Endothelial cell of umbilical vein (primary cell): ENCODE measurements at regions of chr16 and their contacts with region 1.

Region 1: DNA sequence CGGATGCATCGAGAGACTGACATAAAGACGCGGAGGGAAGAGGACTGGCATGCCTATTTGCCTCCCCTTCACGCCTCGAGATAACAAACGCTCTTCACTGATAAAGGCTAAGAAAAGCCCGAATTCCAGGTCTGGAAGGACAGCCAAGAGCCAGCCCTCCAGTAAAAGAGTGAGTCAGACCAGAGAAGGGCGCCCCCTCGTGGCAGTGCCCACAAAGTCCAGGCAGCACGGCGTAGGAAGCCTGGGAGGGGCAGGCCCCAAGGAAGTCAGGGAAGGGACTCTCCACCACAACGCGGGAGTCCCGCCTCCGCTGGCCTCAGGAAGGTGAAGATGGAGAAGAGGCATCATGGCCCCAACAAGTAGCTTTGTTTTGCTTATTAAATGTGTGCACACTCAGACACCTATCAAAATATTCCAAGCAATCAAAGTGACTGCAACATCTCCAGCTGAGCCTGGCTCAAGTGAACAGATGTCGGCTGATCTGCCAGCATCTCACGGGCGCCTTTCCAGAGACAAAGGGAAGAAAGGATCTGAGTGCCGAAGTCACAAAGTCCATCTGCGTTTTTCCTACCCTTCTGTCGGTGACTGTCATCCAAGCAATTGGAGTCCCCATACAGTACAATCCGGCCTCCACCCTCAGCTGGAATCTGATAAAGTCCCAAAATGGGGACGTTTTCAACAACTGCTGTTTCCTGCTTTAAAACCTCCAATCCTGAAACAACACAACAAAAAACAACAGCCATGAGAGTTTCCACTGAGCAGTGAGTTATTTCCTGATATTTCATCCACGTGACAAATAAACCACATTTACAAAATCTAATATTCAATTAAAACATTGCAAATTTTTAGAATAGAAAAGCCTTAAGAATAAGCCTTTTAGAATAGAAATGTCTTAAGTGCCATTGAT is 20.4 kb upstream of the SLC38A8 start:
- DNase-seq: peak; percentile 73
- H3K4me3 ChIP-seq: no peak overlapping the region
- H3K27ac ChIP-seq: peak overlapping the region; percentile 1
- H3K4me1 ChIP-seq: peaks cover 7% of the 10 kb centered on the region
- H3K27me3 ChIP-seq: no peaks in the 10 kb centered on the region
- CTCF ChIP-seq: peak; percentile 93
- POLR2A ChIP-seq: no peak

Region 2: DNA sequence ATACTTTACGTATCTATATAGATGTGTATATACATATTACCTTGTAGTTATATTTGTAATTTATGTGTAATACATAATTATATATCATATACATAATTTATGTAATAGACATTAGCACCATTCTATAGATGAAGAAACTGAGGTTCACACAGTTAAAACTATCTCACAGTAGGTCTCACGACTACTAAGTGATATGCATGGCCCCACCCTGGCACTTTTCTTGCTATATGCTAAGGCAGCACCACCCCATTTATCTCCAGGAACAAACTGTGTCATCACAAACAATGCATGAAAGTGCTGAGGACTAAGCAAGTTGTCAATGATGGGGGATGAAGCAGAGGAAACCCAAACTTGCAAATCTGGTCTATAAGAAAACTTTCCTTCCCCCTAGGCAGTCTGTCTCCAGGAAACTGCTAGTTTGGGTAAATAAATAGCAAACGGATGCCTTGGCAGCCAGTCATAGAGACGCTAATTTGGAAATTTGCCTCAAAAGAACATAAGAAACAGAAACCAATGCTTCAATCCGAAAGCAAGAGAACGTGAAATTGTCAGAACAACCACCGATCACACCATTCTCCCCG is 260.9 kb before region 1 on chr16:
- CTCF ChIA-PET with region 1: no interaction called
- POLR2A ChIA-PET with region 1: no interaction called
- dilution Hi-C with region 1: no loop called
- intact Hi-C with region 1: no loop called
- DNase-seq: peak; percentile 75
- H3K4me3 ChIP-seq: peak overlapping the region in 1 of 3 experiments; percentile 3
- H3K27ac ChIP-seq: no peak overlapping the region
- H3K4me1 ChIP-seq: peaks cover 6% of the 10 kb centered on the region
- H3K27me3 ChIP-seq: no peaks in the 10 kb centered on the region
- CTCF ChIP-seq: no peak
- POLR2A ChIP-seq: no peak

Region 3: GRCh38 chr16:83826146-83826913 is 236.7 kb before region 1 on chr16:
- CTCF ChIA-PET with region 1: interaction called, 5 read pairs
- POLR2A ChIA-PET with region 1: no interaction called
- dilution Hi-C with region 1: no loop called
- intact Hi-C with region 1: loop called (anchors 1 kb)
- DNase-seq: peak; percentile 65
- H3K4me3 ChIP-seq: no peak overlapping the region
- H3K27ac ChIP-seq: no peak overlapping the region
- H3K4me1 ChIP-seq: no peaks in the 10 kb centered on the region
- H3K27me3 ChIP-seq: peaks cover under 1 to 11% of the 10 kb centered on the region in 2 experiments
- CTCF ChIP-seq: peak; percentile 89 to 91
- POLR2A ChIP-seq: no peak

Region 4: DNA sequence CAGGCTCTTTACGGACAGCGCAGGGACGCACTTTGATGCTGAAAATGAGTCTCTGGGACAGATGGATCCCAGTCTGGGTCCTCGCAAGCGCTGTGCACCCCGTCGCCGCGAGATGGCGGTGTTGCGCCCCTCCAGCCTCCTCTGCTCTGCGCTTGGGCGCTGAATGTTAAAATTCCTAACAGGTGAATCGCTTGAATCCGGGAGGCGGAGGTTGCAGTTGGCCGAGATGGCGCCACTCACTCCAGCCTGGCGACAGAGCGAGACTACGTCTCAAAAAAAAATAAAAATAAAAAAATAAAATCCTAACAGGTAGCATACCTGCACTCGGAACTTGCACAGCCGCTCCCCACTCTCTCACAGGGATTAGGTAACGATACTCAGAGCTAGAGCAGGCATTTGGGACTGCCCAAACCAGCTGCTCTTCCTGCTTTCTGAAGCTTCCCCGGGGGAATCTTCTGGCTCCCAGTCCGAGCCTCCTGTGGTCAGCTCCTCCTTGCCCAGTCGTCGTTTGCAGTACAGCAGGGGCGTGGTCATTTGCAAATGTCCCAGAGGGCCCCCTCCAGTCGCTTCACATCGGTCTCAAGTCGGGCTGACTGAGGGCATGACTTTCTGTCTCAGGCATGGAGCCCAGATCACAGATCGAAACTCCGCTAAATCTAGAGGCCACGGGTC is 136.1 kb before region 1 on chr16:
- CTCF ChIA-PET with region 1: interaction called, 5 read pairs
- POLR2A ChIA-PET with region 1: no interaction called
- dilution Hi-C with region 1: no loop called
- intact Hi-C with region 1: loop called (anchors 1 kb)
- DNase-seq: peak; percentile 54
- H3K4me3 ChIP-seq: no peak overlapping the region
- H3K27ac ChIP-seq: no peak overlapping the region
- H3K4me1 ChIP-seq: peaks cover 3% of the 10 kb centered on the region
- H3K27me3 ChIP-seq: no peaks in the 10 kb centered on the region
- CTCF ChIP-seq: peak; percentile 98
- POLR2A ChIP-seq: no peak

Region 5: GRCh38 chr16:83967806-83968305 is 95.1 kb before region 1 on chr16 and contains the start of gene NECAB2:
- CTCF ChIA-PET with region 1: interaction called, 8 read pairs
- POLR2A ChIA-PET with region 1: no interaction called
- dilution Hi-C with region 1: no loop called
- intact Hi-C with region 1: loop called (anchors 1 kb)
- DNase-seq: peak; percentile 14
- H3K4me3 ChIP-seq: peak within 1 kb of the TSS in 1 of 3 experiments; percentile 23
- H3K27ac ChIP-seq: no peak within 1 kb of the TSS
- H3K4me1 ChIP-seq: no peaks in the 10 kb centered on the region
- H3K27me3 ChIP-seq: peaks cover 5 to 8% of the 10 kb centered on the region in 2 experiments
- CTCF ChIP-seq: peak; percentile 48 to 64
- POLR2A ChIP-seq: no peak
- total RNA-seq, gene NECAB2: 0.31 TPM in 1 of 2 replicates, not detected in the other

Region 6: GRCh38 chr16:84484579-84485254 is 421.7 kb after region 1 on chr16:
- CTCF ChIA-PET with region 1: no interaction called
- POLR2A ChIA-PET with region 1: no interaction called
- dilution Hi-C with region 1: no loop called
- intact Hi-C with region 1: loop called (anchors 10 kb)
- DNase-seq: peak; percentile 61
- H3K4me3 ChIP-seq: no peak overlapping the region
- H3K27ac ChIP-seq: no peak overlapping the region
- H3K4me1 ChIP-seq: no peaks in the 10 kb centered on the region
- H3K27me3 ChIP-seq: no peaks in the 10 kb centered on the region
- CTCF ChIP-seq: peak; percentile 58 to 69
- POLR2A ChIP-seq: no peak

Region 7: DNA sequence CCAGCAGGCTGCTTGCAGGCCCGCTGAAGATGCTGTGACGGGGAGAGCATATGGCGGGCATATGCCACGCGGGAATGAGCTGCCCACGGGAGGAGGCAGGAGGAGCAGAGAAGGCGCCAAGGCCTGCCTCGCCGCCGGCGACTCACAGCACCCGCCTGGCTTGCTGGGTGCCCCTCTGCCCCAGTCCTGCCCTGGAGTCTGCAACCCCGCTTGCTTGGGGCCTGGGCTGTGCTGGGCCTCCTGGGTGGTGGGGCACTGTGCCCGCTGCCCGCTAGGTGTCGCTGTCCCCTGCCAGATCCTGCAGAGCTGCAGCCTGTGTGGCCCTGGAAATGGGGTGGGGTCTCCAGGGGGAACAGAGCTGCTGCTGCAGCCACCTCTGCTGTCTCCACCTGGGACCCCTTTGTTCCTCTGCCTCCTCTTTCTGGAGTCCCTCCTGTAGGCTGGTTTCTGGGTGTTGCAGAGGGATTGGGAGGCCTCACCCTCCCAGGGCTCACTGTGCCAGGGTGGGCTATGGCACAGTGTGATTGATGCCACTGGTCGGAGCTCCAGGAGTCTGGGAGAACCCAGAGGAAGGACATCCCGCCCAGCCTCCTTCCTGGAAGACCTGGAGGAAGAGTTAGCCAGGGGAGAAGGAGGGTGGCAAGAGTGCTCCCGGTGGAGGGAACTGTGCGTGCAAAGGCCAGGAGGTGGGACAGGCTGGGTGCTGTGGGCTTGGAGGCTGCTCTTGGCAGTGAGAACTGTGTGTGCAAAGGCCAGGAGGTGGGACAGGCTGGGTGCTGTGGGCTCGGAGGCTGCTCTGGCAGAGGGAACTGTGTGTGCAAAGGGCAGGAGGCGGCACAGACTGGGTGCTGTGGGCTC is 1190.3 kb after region 1 on chr16:
- CTCF ChIA-PET with region 1: no interaction called
- POLR2A ChIA-PET with region 1: no interaction called
- dilution Hi-C with region 1: no loop called
- intact Hi-C with region 1: no loop called
- DNase-seq: peak; percentile 28
- H3K4me3 ChIP-seq: no peak overlapping the region
- H3K27ac ChIP-seq: no peak overlapping the region
- H3K4me1 ChIP-seq: no peaks in the 10 kb centered on the region
- H3K27me3 ChIP-seq: no peaks in the 10 kb centered on the region
- CTCF ChIP-seq: peak; percentile 92 to 97
- POLR2A ChIP-seq: no peak